AG04449 (cell line): ENCODE measurements at regions of chr4 and their contacts with region 1.

Region 1: DNA sequence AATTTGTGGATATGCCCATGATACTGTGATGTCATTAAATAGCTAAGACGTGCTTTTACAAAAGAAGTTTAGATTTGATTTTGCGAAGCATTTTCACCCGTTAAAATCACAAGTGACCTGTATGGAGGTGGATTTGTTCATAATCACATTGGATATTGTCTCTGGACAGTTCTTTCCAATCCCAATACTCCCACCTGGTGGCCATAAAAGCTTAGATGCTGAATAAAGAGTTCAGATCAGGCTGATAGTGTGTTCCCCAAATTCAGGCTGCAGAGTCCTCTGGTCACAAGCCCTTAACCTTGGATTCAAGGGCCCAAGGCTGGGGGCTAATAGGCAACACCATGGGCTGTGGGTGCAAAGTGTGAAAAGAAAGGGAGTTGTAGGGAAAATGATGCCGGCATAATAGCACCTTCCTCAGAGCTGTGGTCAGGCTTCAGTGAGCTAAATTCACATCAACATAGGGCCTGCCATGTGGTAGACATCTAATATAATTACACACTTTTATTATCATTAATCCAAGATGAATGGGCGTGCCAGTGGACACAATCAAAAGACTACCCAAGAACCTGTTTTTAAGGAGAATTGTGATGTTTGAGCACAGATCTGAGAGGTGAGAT is 28.1 kb downstream of the SMIM43 start:
- DNase-seq: no peak
- H3K4me3 ChIP-seq: no peak overlapping the region
- CTCF ChIP-seq: peak; percentile 39

Region 2: GRCh38 chr4:121462660-121463261 is 274.1 kb before region 1 on chr4:
- CTCF ChIA-PET with region 1: interaction called, 51 read pairs
- POLR2A ChIA-PET with region 1: no interaction called
- DNase-seq: peak; percentile 7
- H3K4me3 ChIP-seq: no peak overlapping the region
- CTCF ChIP-seq: peak; percentile 69

Region 3: DNA sequence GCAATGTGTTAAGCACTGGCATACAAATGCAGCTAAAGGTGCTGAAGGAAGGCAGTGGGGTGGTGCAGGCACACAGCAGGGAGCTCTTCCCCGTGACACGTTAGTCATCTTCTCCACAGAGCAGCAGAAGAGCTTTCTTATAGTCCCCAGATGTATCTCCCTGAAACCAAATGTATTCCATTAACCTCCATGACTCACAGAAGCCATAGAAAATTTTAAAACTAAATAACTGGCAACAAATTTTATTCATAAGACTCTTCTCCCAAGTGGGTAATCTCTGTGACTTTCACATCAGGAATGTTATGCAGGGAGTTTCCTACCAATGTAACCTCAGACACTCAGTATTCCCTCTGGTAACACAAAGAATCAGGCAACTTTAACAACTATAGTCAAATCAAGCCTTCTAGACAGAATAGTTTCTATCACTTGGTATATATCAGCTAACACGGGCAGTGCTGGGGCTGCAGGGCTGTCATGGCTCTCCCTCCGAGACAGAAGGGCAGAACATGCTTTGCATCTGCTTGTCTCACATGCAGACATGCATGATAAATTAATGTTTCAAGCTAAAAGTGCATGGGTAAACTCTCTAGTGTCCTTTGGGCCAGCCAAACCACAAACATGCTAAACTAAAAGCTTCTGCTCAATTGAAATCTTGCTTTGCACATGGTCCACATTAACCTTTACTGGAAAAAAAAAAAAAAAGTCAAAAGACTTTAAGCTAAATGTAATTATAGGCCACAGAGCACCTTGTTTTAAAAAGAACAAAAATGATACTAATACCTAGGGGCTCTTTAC is 68.3 kb before region 1 on chr4:
- CTCF ChIA-PET with region 1: interaction called, 17 read pairs
- POLR2A ChIA-PET with region 1: interaction called, 4 read pairs
- DNase-seq: peak; percentile 95
- H3K4me3 ChIP-seq: no peak overlapping the region
- CTCF ChIP-seq: no peak

Region 4: GRCh38 chr4:121711263-121712000 is 25.4 kb before region 1 on chr4:
- CTCF ChIA-PET with region 1: interaction called, 10 read pairs
- POLR2A ChIA-PET with region 1: no interaction called
- DNase-seq: peak; percentile 81
- H3K4me3 ChIP-seq: peak overlapping the region; percentile 46
- CTCF ChIP-seq: no peak

Region 5: DNA sequence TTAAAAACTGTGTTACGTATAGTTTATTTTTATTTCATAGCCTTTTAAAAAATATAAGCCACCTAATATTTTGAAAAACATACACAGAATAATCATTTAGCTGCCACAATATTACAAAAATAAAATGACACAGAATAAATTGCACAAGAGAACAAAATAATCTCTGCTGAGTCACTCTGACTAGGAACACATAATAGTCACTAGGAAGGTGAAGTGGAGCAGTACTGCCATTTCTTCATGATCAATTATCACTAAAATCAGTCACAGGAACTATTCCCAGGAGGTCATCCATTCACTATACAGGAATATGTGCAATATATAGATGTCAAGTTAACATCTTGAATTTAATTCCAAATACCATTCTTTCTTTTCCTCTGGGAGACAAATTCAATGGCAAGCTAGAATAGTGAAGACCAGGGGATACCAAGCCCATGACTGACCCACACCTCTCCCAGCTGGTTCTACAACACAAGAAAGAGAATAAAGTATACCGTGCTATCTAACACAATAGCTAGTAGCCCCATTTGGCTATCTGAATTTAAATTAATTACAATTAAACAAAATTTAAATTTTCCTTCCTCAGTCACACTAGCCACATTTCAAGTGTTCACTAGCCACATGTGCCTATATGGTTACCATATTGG is 22.2 kb after region 1 on chr4:
- CTCF ChIA-PET with region 1: interaction called, 26 read pairs
- POLR2A ChIA-PET with region 1: no interaction called
- DNase-seq: no peak
- H3K4me3 ChIP-seq: no peak overlapping the region
- CTCF ChIP-seq: no peak